A549 (cell line): ENCODE measurements at regions of chr5 and their contacts with region 1.

Region 1: GRCh38 chr5:142655339-142656267 is 30.3 kb downstream of the FGF1 start:
- DNase-seq: peak; percentile 71 to 81
- ATAC-seq: peak; percentile 95 to 98
- H3K4me3 ChIP-seq: no peak overlapping the region
- H3K27ac ChIP-seq: no peak overlapping the region
- H3K4me1 ChIP-seq: peaks cover 4% of the 10 kb centered on the region; the same call in 1 of the 3 replicates
- CTCF ChIP-seq: peak; percentile 98
- EP300 ChIP-seq: no peak
- POLR2A ChIP-seq: no peak
- RAD21 ChIP-seq: peak; percentile 97

Region 2: DNA sequence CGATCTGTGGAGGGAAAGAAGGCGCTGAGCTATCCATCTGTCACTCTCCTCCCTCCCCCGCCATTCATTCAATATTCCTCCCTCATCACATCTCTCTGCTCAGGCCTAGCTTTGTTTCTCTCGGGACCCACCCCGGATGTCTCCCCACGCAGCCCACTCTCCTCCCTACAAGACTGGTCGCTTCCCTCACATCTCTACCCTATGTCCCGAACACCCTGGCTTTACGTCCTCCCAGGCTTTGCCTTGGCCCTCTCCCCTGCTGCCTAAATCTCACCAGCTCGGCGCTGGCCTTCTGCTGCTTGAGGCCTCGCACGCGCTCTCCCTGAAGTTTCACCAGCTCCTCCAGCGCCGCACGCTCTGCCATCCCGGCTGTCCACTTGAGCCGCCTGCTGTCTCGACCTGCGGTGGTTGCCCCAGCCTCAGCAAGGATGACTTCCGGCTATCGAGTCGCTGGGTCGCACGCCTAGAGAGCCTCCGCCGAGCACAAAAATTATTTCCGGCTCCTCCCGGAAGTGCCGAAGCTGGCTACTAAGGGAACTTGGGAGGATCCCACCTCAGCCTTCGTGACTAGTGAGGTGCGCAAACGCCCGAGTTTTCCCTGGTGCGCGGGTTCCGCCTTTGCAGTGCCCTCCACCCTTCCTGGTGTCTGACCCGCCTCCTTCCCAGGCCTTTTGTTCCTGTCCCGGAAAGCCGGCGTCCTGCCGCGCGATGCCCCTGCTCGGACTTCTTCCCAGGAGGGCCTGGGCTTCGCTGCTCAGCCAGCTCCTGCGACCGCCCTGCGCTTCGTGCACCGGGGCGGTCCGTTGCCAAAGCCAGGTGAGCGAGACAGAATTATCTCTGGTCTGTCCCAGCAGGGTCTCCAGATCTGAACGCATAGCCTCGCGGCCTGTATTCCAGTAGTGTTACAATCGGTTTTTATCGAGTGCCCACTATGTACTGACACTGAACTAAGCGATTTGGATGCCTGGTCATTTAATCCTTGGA is 1964.4 kb before region 1 on chr5 and contains the starts of genes HARS1 and HARS2:
- CTCF ChIA-PET with region 1: no interaction called
- POLR2A ChIA-PET with region 1: no interaction called
- DNase-seq: peak; percentile 97 to 98
- ATAC-seq: peak; percentile 98 to 99
- H3K4me3 ChIP-seq: peak within 1 kb of the TSS; percentile 81
- H3K27ac ChIP-seq: peak within 1 kb of the TSS; percentile 90 to 91
- H3K4me1 ChIP-seq: peaks cover 17% of the 10 kb centered on the region
- CTCF ChIP-seq: no peak
- EP300 ChIP-seq: no peak
- POLR2A ChIP-seq: peak; percentile 93
- RAD21 ChIP-seq: peak in 1 of 2 experiments; percentile 28; a peak in 1 of 5 replicates
- polyA plus RNA-seq, gene HARS1: 73.0 and 80.5 TPM in 2 replicates
- polyA plus RNA-seq, gene HARS2: 46.6 and 55.1 TPM in 2 replicates

Region 3: GRCh38 chr5:142611154-142611553 is 44.4 kb before region 1 on chr5:
- CTCF ChIA-PET with region 1: interaction called, 97 read pairs
- POLR2A ChIA-PET with region 1: no interaction called
- DNase-seq: peak; percentile 68 to 69
- ATAC-seq: peak; percentile 93 to 98
- H3K4me3 ChIP-seq: no peak overlapping the region
- H3K27ac ChIP-seq: no peak overlapping the region
- H3K4me1 ChIP-seq: 0 out of 3 replicates have a peak, but pooled peaks cover 5% of the 10 kb centered on the region
- CTCF ChIP-seq: peak; percentile 93
- EP300 ChIP-seq: no peak
- POLR2A ChIP-seq: no peak
- RAD21 ChIP-seq: peak; percentile 95 to 96

Region 4: DNA sequence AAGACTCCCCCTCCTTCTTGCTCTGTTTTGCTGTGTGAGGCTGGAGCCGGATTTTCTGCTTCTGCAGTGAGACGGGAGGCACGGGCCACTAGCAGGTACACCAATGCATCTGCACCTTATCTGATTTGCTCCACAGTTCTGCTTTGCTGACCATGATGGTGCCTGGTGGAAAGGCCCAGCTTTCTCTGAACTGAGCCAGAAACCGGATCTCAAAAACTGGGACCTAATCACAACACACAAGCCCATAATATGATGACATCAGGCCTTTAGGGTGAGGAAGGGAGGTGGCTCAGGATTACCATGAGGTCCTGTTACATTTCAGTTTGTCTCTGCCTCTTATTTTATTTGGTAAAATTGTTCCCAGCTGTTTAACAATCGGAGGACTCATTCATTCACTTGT is 19.5 kb before region 1 on chr5:
- CTCF ChIA-PET with region 1: interaction called, 95 read pairs
- POLR2A ChIA-PET with region 1: no interaction called
- DNase-seq: no peak
- ATAC-seq: no peak
- H3K4me3 ChIP-seq: no peak overlapping the region
- H3K27ac ChIP-seq: no peak overlapping the region
- H3K4me1 ChIP-seq: no peaks in the 10 kb centered on the region
- CTCF ChIP-seq: no peak
- EP300 ChIP-seq: no peak
- POLR2A ChIP-seq: no peak
- RAD21 ChIP-seq: no peak

Region 5: GRCh38 chr5:142674531-142675469 is 19.2 kb after region 1 on chr5:
- CTCF ChIA-PET with region 1: interaction called, 68 read pairs
- POLR2A ChIA-PET with region 1: no interaction called
- DNase-seq: no peak
- ATAC-seq: no peak
- H3K4me3 ChIP-seq: no peak overlapping the region
- H3K27ac ChIP-seq: no peak overlapping the region
- H3K4me1 ChIP-seq: peaks cover 10% of the 10 kb centered on the region; the same call in 2 of the 3 replicates
- CTCF ChIP-seq: no peak
- EP300 ChIP-seq: no peak
- POLR2A ChIP-seq: no peak
- RAD21 ChIP-seq: no peak

Region 6: GRCh38 chr5:142881076-142881783 is 225.6 kb after region 1 on chr5:
- CTCF ChIA-PET with region 1: interaction called, 26 read pairs
- POLR2A ChIA-PET with region 1: no interaction called
- DNase-seq: no peak
- ATAC-seq: peak in 1 of 2 experiments; percentile 45; a peak in 2 of 6 replicates
- H3K4me3 ChIP-seq: no peak overlapping the region
- H3K27ac ChIP-seq: no peak overlapping the region
- H3K4me1 ChIP-seq: peaks cover 29% of the 10 kb centered on the region
- CTCF ChIP-seq: no peak
- EP300 ChIP-seq: no peak
- POLR2A ChIP-seq: no peak
- RAD21 ChIP-seq: no peak